ENCODE measurements at regions of chr10 and their contacts with region 1.

Region 1: DNA sequence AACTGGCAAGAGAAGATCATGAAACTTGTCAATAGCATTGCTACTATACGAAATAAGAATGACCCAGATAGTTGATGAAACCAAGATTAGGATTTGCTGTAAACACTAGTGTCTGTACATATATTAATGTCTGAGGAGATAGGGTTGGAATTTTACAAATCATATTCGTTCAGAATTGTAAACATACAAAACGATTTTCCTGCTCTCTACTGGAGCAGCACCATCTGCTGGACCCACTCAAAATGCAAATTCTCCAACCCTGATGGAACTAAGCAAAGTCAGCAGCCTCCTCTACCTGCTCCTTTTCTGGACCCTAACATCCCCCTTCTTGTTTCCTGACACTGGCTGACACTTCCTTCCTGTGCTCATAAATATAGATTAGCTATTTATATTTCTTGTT is 29.4 kb upstream of the SGMS1 start:
- DNase-seq: no peak
- ATAC-seq: peak; percentile 27
- H3K4me3 Mint-ChIP-seq: no peak overlapping the region
- H3K27ac Mint-ChIP-seq: no peak overlapping the region
- H3K4me1 Mint-ChIP-seq: peaks cover 31% of the 10 kb centered on the region
- H3K27me3 Mint-ChIP-seq: no peaks in the 10 kb centered on the region
- CTCF ChIP-seq: no peak

Region 2: DNA sequence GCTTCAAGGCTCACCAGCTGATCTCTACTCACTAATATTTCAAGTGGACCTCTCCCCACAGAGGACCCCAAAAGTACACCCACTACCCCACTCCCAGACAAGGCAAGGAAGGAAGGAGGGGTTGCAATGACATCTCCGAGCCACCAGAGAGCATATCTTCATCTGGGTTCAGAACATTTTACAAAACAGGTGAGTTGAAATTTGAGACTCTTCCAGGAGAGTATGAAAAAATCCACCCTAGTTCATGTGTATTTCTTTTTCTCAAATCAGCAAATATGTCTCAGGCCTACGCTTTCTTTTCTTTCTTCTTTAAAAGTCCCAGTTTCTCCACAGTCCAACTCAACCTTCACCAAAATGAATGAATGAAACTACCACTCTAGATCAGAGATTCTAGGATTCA is 91.3 kb before region 1 on chr10:
- CTCF ChIA-PET with region 1: no interaction called
- POLR2A ChIA-PET with region 1: no interaction called
- intact Hi-C with region 1: loop called (anchors 1 kb)
- DNase-seq: no peak
- ATAC-seq: peak; percentile 47
- H3K4me3 Mint-ChIP-seq: no peak overlapping the region
- H3K27ac Mint-ChIP-seq: no peak overlapping the region
- H3K4me1 Mint-ChIP-seq: peaks cover 7% of the 10 kb centered on the region
- H3K27me3 Mint-ChIP-seq: no peaks in the 10 kb centered on the region
- CTCF ChIP-seq: no peak

Region 3: DNA sequence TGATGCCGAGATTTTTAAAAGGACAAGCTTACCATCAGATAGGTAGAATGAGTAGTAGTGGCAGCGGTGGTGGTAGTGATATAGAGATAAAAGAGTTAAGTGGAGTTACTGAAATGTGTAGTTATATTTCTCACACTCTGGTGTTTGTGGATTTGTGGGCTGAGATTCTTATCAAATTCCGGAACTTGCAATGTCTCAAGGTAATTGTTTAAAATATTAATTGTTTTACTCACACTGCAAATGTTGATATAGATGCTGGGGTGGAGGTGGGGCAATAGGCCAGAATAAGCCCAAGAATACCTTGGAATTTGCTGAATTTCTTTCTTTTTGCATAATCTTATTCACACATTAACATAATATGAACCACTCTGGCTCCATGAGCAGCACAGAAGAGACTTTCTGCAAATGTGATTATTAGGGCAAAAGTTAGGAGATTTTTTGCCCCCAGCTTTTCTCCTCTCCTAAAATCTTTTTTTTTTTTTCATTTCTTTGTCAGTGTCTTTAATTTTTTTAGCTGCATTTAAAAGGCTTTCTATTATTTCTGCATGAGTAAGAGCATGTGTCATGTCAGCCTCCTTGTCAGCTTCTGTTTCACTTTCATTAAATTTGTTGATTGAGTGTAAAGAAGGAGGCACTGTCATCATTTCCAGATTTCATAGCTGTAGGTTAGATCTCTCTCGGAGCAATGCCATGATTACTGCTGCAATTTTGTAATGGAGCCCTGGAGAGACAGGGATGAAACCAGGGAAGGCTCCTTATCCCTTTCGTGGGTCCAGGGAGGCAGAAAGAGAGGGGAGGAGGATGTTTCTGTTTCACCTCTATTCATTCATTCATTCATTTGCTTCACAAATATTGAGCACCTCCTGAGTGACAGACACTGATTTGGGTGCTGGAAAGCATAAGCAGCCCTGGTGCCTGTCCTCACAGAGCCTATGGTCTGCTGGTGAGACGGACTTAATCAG is 16.2 kb before region 1 on chr10:
- CTCF ChIA-PET with region 1: interaction called, 3 read pairs
- POLR2A ChIA-PET with region 1: interaction called, 4 read pairs
- intact Hi-C with region 1: loop called (anchors 1 kb)
- DNase-seq: no peak
- ATAC-seq: peak; percentile 76
- H3K4me3 Mint-ChIP-seq: peak overlapping the region; percentile 50
- H3K27ac Mint-ChIP-seq: peak overlapping the region; percentile 39
- H3K4me1 Mint-ChIP-seq: peaks cover 15% of the 10 kb centered on the region
- H3K27me3 Mint-ChIP-seq: no peaks in the 10 kb centered on the region
- CTCF ChIP-seq: no peak